CD8-positive, alpha-beta T cell (primary cell): ENCODE measurements at regions of chr11 and their contacts with region 1.

Region 1: DNA sequence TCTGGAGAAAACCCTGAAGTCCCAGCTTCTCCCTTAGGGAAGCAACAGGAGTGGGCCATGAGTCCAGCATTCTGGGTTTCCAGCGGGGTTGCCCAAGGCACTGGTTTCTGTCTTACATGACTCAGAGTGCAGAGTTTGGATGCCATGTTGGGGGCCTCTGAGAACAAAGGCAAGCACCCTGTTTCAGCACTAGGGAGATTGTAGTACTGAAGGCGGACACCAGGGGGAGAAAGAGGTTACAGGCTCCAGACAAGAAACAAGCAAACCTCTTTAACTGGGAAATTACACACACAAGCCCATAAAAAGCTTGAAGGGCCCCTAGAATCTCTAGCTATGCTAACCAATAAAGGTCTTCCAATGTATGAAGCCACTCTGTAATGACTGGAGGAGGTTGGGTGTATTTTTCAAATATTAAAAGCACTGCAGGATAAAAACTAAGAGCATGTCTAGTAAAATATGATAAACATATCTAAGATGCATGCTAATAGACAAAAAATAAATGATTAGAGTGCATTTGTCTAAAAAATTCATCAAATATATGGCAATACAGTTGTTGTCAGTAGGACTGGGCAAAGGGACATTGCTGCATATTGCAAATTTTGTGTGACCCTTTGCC is 7.1 kb downstream of the MS4A6E start:
- DNase-seq: peak; percentile 38 to 67 (median 57)
- ATAC-seq: peak; percentile 44
- H3K4me3 ChIP-seq: no peak overlapping the region
- H3K4me3 Mint-ChIP-seq: no peak overlapping the region
- H3K27ac ChIP-seq: no peak overlapping the region
- H3K27ac Mint-ChIP-seq: no peak overlapping the region
- H3K4me1 ChIP-seq: no peaks in the 10 kb centered on the region
- H3K4me1 Mint-ChIP-seq: no peaks in the 10 kb centered on the region
- H3K27me3 ChIP-seq: no peaks in the 10 kb centered on the region
- H3K27me3 Mint-ChIP-seq: peaks cover 15% of the 10 kb centered on the region
- CTCF ChIP-seq: peak; percentile 72

Region 2: GRCh38 chr11:60193687-60194433 is 140.3 kb before region 1 on chr11:
- CTCF ChIA-PET with region 1: no interaction called
- POLR2A ChIA-PET with region 1: no interaction called
- intact Hi-C with region 1: no loop called
- DNase-seq: peak; percentile 25 to 62 (median 48)
- ATAC-seq: peak; percentile 62
- H3K4me3 ChIP-seq: no peak overlapping the region
- H3K4me3 Mint-ChIP-seq: no peak overlapping the region
- H3K27ac ChIP-seq: no peak overlapping the region
- H3K27ac Mint-ChIP-seq: no peak overlapping the region
- H3K4me1 ChIP-seq: no peaks in the 10 kb centered on the region
- H3K4me1 Mint-ChIP-seq: no peaks in the 10 kb centered on the region
- H3K27me3 ChIP-seq: no peaks in the 10 kb centered on the region
- H3K27me3 Mint-ChIP-seq: peaks cover 3% of the 10 kb centered on the region
- CTCF ChIP-seq: peak; percentile 79

Region 3: DNA sequence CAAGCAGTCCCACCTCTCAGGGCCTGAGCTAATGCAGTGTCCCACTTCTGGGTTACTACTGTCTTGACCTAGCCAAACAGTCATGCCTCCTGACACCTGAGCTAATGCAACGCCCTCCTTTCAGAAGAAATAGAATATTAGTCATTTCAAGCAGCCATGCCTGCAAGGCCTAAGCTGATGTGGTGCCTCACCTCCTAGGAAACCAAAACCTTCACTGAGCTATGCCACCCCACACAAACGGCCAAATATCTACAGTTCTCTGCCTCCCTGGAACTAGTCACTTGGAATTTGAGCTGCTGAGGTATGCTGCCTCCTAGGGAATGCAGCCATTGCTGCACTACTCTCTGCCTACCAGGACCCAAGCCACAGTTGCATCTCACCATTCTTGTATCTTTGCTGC is 15.4 kb before region 1 on chr11:
- CTCF ChIA-PET with region 1: no interaction called
- POLR2A ChIA-PET with region 1: no interaction called
- intact Hi-C with region 1: no loop called
- DNase-seq: no peak
- ATAC-seq: no peak
- H3K4me3 ChIP-seq: no peak overlapping the region
- H3K4me3 Mint-ChIP-seq: no peak overlapping the region
- H3K27ac ChIP-seq: no peak overlapping the region
- H3K27ac Mint-ChIP-seq: no peak overlapping the region
- H3K4me1 ChIP-seq: no peaks in the 10 kb centered on the region
- H3K4me1 Mint-ChIP-seq: no peaks in the 10 kb centered on the region
- H3K27me3 ChIP-seq: peaks cover 0 to 3% of the 10 kb centered on the region in 2 experiments
- H3K27me3 Mint-ChIP-seq: peaks cover 3% of the 10 kb centered on the region
- CTCF ChIP-seq: no peak

Region 4: GRCh38 chr11:60345489-60345888 is 11.4 kb after region 1 on chr11:
- CTCF ChIA-PET with region 1: interaction called, 22 read pairs
- POLR2A ChIA-PET with region 1: no interaction called
- intact Hi-C with region 1: no loop called
- DNase-seq: peak in 2 of 9 experiments; percentile 15 to 18
- ATAC-seq: no peak
- H3K4me3 ChIP-seq: no peak overlapping the region
- H3K4me3 Mint-ChIP-seq: no peak overlapping the region
- H3K27ac ChIP-seq: no peak overlapping the region
- H3K27ac Mint-ChIP-seq: no peak overlapping the region
- H3K4me1 ChIP-seq: no peaks in the 10 kb centered on the region
- H3K4me1 Mint-ChIP-seq: no peaks in the 10 kb centered on the region
- H3K27me3 ChIP-seq: no peaks in the 10 kb centered on the region
- H3K27me3 Mint-ChIP-seq: peaks cover 13% of the 10 kb centered on the region
- CTCF ChIP-seq: no peak

Region 5: GRCh38 chr11:60615497-60615896 is 281.4 kb after region 1 on chr11:
- CTCF ChIA-PET with region 1: interaction called, 4 read pairs
- POLR2A ChIA-PET with region 1: no interaction called
- intact Hi-C with region 1: loop called in 1 of 2 experiments (anchors 2 kb)
- DNase-seq: no peak
- ATAC-seq: no peak
- H3K4me3 ChIP-seq: no peak overlapping the region
- H3K4me3 Mint-ChIP-seq: no peak overlapping the region
- H3K27ac ChIP-seq: no peak overlapping the region
- H3K27ac Mint-ChIP-seq: no peak overlapping the region
- H3K4me1 ChIP-seq: no peaks in the 10 kb centered on the region
- H3K4me1 Mint-ChIP-seq: peaks cover 3% of the 10 kb centered on the region
- H3K27me3 ChIP-seq: no peaks in the 10 kb centered on the region
- H3K27me3 Mint-ChIP-seq: peaks cover 8% of the 10 kb centered on the region
- CTCF ChIP-seq: no peak